PC-9 (cell line): ENCODE measurements at regions of chr6 and their contacts with region 1.

Region 1: GRCh38 chr6:127464881-127465459 is 5.8 kb upstream of the KIAA0408 start:
- DNase-seq: peak; percentile 55 to 59
- H3K4me3 ChIP-seq: no peak overlapping the region
- H3K27ac ChIP-seq: no peak overlapping the region
- H3K4me1 ChIP-seq: no peaks in the 10 kb centered on the region
- H3K27me3 ChIP-seq: no peaks in the 10 kb centered on the region
- CTCF ChIP-seq: peak; percentile 96

Region 2: DNA sequence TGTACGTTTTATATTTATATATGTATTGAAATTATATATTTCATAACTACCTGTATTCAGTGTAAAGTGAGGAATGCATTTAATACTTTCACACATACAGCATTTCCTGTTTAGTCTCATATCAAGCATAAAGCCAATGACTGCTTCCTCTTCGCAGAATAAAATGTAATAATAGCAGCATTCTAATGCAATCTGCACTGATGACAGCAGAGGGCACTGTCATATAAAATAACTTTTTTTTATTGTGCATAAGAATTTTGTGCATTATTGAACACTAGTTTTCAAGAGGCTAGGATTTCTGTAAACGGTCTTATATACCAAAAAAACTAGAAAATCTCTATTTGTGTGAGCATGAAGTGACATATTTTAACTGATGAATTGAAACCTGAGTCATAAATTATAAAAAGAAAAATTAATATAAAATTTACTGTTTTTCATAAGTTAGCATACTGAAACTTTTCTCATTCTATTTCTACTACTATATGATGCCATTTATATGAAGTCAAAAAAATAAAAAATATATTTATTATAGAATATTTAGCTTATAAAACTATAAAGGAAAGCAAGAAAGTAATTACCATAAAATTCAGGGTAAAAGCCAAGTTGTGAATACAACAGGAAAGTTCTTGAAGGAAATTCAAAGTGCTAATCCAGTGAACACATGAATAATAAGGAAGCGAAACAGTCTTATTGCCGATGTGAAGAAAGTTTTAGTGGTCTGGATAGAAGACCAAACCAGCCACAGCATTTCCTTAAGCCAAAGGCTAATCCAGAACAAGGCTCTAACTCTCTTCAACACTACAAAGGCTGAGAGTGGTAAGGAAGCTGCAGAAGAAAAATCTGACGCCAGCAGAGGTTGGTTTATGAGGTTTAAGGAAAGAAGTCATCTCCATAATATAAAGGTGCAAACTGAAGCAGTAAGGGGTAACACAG is 162.0 kb before region 1 on chr6:
- CTCF ChIA-PET with region 1: interaction called, 7 read pairs
- POLR2A ChIA-PET with region 1: no interaction called
- intact Hi-C with region 1: loop called (anchors 2 kb)
- DNase-seq: peak; percentile 18 to 59
- H3K4me3 ChIP-seq: no peak overlapping the region
- H3K27ac ChIP-seq: no peak overlapping the region
- H3K4me1 ChIP-seq: peaks cover 6% of the 10 kb centered on the region; the same call in 1 of the 2 replicates
- H3K27me3 ChIP-seq: no peaks in the 10 kb centered on the region
- CTCF ChIP-seq: peak; percentile 93

Region 3: DNA sequence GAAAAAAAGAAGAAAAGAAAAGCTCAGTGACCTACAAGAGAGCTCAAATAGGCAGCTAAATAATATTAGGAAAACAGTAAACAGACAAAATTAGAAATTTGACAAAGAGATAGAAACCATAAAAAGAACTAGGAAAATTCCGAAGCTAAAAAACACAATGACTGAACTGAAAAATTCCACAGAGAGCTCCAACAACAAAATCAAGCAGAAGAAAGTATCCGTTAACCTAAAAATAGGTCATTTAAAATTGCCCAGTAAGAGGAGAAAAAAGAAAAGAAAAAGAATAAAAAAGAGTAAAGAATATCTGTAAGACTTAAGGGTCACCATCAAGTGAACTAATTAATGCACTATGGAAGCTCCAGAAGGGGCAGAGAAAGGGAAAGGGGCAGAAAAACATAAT is 115.0 kb before region 1 on chr6:
- CTCF ChIA-PET with region 1: no interaction called
- POLR2A ChIA-PET with region 1: interaction called, 11 read pairs
- intact Hi-C with region 1: no loop called
- DNase-seq: no peak
- H3K4me3 ChIP-seq: no peak overlapping the region
- H3K27ac ChIP-seq: no peak overlapping the region
- H3K4me1 ChIP-seq: peaks cover 33% of the 10 kb centered on the region
- H3K27me3 ChIP-seq: no peaks in the 10 kb centered on the region
- CTCF ChIP-seq: no peak

Region 4: DNA sequence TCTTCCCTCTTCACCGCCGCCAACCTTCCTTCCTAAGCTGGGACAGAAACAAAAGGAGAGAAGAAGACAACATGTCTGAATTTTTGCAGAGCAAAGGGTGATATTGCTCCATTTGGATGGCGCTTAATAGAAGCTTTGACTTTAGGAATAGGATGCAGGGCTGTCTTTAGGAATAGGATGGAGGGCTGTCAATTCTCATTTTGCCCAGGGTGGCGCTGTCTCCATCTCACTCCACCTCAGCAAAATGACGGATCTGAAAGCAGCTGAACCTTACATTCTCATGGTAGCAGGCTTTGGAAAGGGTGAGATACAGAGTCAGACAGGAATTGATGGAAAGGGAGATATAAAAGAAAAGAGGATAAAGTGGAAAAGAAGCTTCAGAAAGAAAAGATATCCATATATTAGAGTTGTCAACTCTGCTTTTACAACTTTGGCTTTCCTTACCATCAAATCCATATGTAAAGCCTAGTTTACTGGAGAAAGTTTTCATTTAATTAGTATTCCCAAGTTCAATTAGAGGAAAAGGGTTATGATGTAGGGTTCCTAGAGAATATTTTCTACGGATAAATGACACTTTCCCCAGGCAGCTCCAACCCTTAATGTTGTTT is 51.8 kb after region 1 on chr6:
- CTCF ChIA-PET with region 1: no interaction called
- POLR2A ChIA-PET with region 1: no interaction called
- intact Hi-C with region 1: loop called (anchors 5 kb)
- DNase-seq: peak; percentile 16 to 44
- H3K4me3 ChIP-seq: peak overlapping the region; percentile 70
- H3K27ac ChIP-seq: no peak overlapping the region
- H3K4me1 ChIP-seq: peaks cover 9% of the 10 kb centered on the region; the same call in 1 of the 2 replicates
- H3K27me3 ChIP-seq: peaks cover 8% of the 10 kb centered on the region; the same call in 1 of the 2 replicates
- CTCF ChIP-seq: peak; percentile 89

Region 5: DNA sequence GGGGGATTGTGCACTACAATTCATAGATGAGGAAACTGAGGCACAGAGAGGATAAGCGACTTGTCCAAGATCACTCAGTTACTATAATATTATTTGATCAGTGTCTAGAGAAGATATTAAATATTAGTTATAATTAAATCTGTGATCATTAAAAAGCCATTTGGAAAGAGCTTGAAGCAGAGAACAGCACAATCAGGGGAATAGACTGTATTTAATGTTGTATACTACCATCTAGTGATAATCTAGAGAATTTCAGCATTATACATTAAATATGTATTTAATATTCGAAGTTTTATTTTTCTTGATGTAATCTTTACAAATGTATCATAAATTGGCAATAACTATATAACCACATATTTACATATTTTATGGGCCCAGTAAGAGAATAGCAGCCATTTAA is 74.3 kb after region 1 on chr6:
- CTCF ChIA-PET with region 1: interaction called, 9 read pairs
- POLR2A ChIA-PET with region 1: no interaction called
- intact Hi-C with region 1: loop called (anchors 1 kb)
- DNase-seq: peak in 1 of 2 experiments; percentile 40
- H3K4me3 ChIP-seq: no peak overlapping the region
- H3K27ac ChIP-seq: no peak overlapping the region
- H3K4me1 ChIP-seq: no peaks in the 10 kb centered on the region
- H3K27me3 ChIP-seq: no peaks in the 10 kb centered on the region
- CTCF ChIP-seq: peak; percentile 77

Region 6: DNA sequence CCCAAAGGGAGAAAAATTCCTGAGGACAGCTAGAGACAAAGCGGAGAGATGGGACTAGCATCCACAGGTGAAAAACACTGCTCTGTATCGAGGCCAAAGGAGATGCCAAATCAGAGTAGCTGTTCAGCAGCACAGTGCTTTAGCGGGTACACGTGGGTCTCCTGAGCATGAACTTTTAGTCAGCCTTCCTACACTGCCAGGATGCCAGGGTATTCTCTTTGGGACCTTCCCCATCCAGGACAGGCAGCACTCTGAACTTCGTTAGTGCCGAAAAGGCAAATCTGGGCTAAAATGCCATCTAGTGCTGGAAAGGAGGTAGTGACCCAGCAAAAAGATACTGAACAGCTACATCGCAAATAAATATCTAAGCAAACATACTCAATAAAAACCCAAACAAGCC is 176.9 kb after region 1 on chr6:
- CTCF ChIA-PET with region 1: no interaction called
- POLR2A ChIA-PET with region 1: no interaction called
- intact Hi-C with region 1: loop called (anchors 10 kb)
- DNase-seq: peak in 1 of 2 experiments; percentile 3
- H3K4me3 ChIP-seq: no peak overlapping the region
- H3K27ac ChIP-seq: no peak overlapping the region
- H3K4me1 ChIP-seq: no peaks in the 10 kb centered on the region
- H3K27me3 ChIP-seq: no peaks in the 10 kb centered on the region
- CTCF ChIP-seq: peak; percentile 85

Region 7: GRCh38 chr6:127690092-127690491 is 225.1 kb after region 1 on chr6:
- CTCF ChIA-PET with region 1: no interaction called
- POLR2A ChIA-PET with region 1: no interaction called
- intact Hi-C with region 1: loop called (anchors 10 kb)
- DNase-seq: peak in 1 of 2 experiments; percentile 0
- H3K4me3 ChIP-seq: no peak overlapping the region
- H3K27ac ChIP-seq: no peak overlapping the region
- H3K4me1 ChIP-seq: no peaks in the 10 kb centered on the region
- H3K27me3 ChIP-seq: no peaks in the 10 kb centered on the region
- CTCF ChIP-seq: peak; percentile 82